ENCODE measurements at regions of chr11 and their contacts with region 1.

Region 1: GRCh38 chr11:56917708-56918400 is 70.9 kb upstream of the OR5AK2 start:
- DNase-seq: no peak
- H3K4me3 ChIP-seq: no peak overlapping the region
- H3K27ac ChIP-seq: no peak overlapping the region
- H3K4me1 ChIP-seq: no peaks in the 10 kb centered on the region
- H3K27me3 ChIP-seq: no peaks in the 10 kb centered on the region
- CTCF ChIP-seq: no peak
- POLR2A ChIP-seq: no peak

Region 2: DNA sequence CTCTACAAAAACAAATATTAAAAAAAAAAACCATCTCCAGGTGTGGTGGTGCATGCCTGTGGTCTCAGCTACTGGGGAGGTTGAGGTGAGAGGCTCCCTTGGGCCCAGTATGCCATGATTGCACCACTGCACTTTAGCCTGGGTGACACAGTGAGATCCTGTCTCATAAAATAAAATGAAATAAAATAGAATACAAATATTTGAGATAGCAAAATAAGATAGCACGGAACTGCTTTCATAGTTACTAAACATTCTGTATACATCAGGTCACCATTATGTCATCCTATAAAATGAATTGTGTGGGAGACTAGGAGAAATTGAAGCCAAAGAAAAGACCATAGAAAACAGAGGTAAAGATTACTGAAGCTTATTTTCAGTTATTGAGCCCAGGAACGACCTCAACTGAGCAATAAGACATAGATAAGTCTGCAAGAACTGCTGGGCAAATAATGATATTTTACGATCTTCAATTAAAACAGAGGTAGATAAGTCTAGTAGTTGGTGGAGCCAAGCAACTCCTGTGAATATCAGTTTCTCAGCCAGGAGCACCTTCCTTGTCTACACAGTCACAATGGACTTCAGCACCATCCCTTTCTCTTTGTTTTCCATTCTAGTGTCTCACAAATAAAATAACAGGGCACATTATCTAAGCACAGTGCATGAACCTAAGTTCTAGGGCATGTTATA is 384.7 kb before region 1 on chr11:
- intact Hi-C with region 1: no loop called
- DNase-seq: no peak
- H3K4me3 ChIP-seq: no peak overlapping the region
- H3K27ac ChIP-seq: no peak overlapping the region
- H3K4me1 ChIP-seq: no peaks in the 10 kb centered on the region
- H3K27me3 ChIP-seq: no peaks in the 10 kb centered on the region
- CTCF ChIP-seq: no peak
- POLR2A ChIP-seq: no peak

Region 3: DNA sequence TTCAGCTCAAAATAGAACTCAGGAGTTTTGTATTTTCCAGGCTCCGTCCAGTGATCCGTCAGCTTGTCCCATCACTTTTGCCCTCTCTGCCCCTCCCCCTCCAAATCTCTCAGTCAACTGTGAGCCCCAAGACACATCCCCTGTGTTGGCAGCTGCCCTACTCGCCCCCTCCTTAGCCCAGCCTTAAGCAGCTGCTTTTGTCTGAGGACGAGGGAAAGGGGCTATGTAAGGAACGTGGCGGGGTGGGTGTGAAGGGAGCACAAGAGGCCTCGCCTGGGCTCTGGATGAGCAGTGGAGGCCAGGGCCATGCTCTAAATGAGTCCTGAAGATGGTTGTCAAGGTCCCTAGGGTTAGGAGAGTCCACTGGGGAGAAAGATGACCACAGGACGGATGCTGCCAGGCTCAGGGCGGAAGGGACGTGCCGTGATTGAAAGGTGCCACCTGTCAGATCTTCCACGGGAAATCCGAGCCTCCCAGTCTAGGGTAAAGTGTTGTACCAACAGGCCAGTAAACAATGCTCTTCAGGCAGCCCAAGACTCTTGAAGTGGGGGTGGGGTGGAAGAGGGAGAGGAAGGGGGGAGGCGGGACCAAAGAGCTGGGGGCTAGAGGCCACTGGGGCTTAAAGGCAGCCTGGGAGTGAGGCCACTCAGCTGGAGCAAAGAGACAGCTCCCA is 619.2 kb after region 1 on chr11 and contains the start of gene SMTNL1:
- intact Hi-C with region 1: loop called (anchors 5 kb)
- DNase-seq: no peak
- H3K4me3 ChIP-seq: no peak within 1 kb of the TSS
- H3K27ac ChIP-seq: no peak within 1 kb of the TSS
- H3K4me1 ChIP-seq: no peaks in the 10 kb centered on the region
- H3K27me3 ChIP-seq: no peaks in the 10 kb centered on the region
- CTCF ChIP-seq: no peak
- POLR2A ChIP-seq: no peak
- total RNA-seq, gene SMTNL1: not detected

Measured in breast epithelium (tissue), 4 donors.